Activated CD4-positive, alpha-beta T cell treated with anti-CD3 and anti-CD28 coated beads, Interleukin-2, amount 10 ng/mL, durations not matched to agents 24 days and 14 days (primary cell): ENCODE measurements at regions of chr1 and their contacts with region 1.

Region 1: GRCh38 chr1:112619520-112620376 is at the start of gene CAPZA1:
- DNase-seq: peak; percentile 97
- H3K4me3 Mint-ChIP-seq: peak within 1 kb of the TSS; percentile 99
- H3K27ac Mint-ChIP-seq: peak within 1 kb of the TSS; percentile 100
- H3K4me1 Mint-ChIP-seq: peaks cover 38% of the 10 kb centered on the region
- H3K27me3 Mint-ChIP-seq: no peaks in the 10 kb centered on the region
- total RNA-seq, gene CAPZA1: 241 and 250 TPM in 2 replicates

Region 2: DNA sequence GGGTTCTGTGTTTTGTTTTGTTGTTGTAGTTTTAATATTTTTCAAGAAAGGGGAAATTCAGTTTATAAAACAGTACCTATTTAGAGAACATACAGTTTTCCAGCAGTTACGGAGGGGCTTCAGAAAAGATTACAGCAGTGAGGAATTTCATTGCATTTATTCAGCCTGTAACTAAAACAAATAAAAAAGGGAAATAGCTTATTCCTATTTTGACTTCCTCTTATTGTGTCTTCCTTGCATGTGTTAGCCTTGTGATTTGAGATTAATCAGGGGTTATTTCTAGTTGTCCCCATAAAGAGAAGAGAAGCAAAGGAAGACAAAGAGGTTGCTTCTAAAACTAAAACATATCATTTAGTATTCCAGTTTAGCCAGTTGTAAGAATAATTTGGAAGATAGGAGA is 188.7 kb before region 1 on chr1:
- intact Hi-C with region 1: no loop called
- DNase-seq: no peak
- H3K4me3 Mint-ChIP-seq: no peak overlapping the region
- H3K27ac Mint-ChIP-seq: no peak overlapping the region
- H3K4me1 Mint-ChIP-seq: no peaks in the 10 kb centered on the region
- H3K27me3 Mint-ChIP-seq: peaks cover 12% of the 10 kb centered on the region

Region 3: GRCh38 chr1:112466078-112466660 is 153.6 kb before region 1 on chr1:
- intact Hi-C with region 1: loop called (anchors 2 kb)
- DNase-seq: peak; percentile 96
- H3K4me3 Mint-ChIP-seq: peak overlapping the region; percentile 85
- H3K27ac Mint-ChIP-seq: peak overlapping the region; percentile 68
- H3K4me1 Mint-ChIP-seq: peaks cover 16% of the 10 kb centered on the region
- H3K27me3 Mint-ChIP-seq: peaks cover 30% of the 10 kb centered on the region

Region 4: GRCh38 chr1:112515311-112516009 is 104.3 kb before region 1 on chr1:
- intact Hi-C with region 1: no loop called
- DNase-seq: no peak
- H3K4me3 Mint-ChIP-seq: no peak overlapping the region
- H3K27ac Mint-ChIP-seq: no peak overlapping the region
- H3K4me1 Mint-ChIP-seq: peaks cover 3% of the 10 kb centered on the region
- H3K27me3 Mint-ChIP-seq: peaks cover 16% of the 10 kb centered on the region

Region 5: GRCh38 chr1:112706908-112707663 is 87.3 kb after region 1 on chr1 and contains the start of gene RHOC:
- intact Hi-C with region 1: loop called (anchors 1 kb)
- DNase-seq: peak; percentile 91
- H3K4me3 Mint-ChIP-seq: peak within 1 kb of the TSS; percentile 87
- H3K27ac Mint-ChIP-seq: peak within 1 kb of the TSS; percentile 94
- H3K4me1 Mint-ChIP-seq: peaks cover 56% of the 10 kb centered on the region
- H3K27me3 Mint-ChIP-seq: peaks cover 21% of the 10 kb centered on the region
- total RNA-seq, gene RHOC: 48.5 and 53.4 TPM in 2 replicates

Region 6: GRCh38 chr1:112904071-112904830 is 284.5 kb after region 1 on chr1:
- intact Hi-C with region 1: loop called (anchors 5 kb)
- DNase-seq: peak; percentile 80
- H3K4me3 Mint-ChIP-seq: no peak overlapping the region
- H3K27ac Mint-ChIP-seq: peak overlapping the region; percentile 45
- H3K4me1 Mint-ChIP-seq: peaks cover 28% of the 10 kb centered on the region
- H3K27me3 Mint-ChIP-seq: no peaks in the 10 kb centered on the region

Region 7: DNA sequence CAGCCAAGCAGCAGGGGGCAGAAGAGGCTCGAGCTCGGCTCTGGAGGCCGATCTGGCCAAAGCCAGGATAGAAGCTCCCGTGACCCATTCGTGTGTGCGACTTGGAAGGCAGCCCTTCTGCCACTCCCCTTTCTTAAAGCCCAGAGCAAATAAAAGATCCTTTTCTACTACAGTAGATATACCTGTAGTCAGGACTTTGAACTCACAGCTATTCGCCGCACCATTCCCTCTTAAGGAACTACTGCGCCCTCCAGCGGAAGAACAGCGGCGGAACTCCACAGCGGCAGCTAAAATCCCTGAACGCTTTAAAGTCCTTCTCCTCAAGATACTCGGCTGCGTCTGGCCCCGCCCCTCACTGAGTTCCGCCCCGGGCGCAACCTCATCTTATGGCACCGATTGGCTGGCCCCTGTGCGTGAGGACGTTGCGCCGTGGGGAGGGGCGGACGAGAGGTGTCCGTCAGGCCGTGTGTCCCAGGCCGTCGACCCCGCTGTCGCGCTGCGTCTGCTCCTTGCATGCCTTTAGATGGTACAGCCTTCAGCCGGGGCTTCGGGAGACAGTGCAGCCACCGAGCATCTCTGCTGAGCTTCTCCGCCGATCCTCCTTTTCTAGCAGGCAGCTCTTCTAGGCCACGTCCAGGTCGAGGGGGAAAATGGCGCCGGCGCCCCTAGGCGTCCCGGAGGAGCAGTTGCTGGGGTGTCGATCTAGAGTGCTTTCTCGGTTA is 453.2 kb after region 1 on chr1 and contains the start of gene LRIG2:
- intact Hi-C with region 1: loop called (anchors 2 kb)
- DNase-seq: peak; percentile 99
- H3K4me3 Mint-ChIP-seq: peak within 1 kb of the TSS; percentile 100
- H3K27ac Mint-ChIP-seq: peak within 1 kb of the TSS; percentile 93
- H3K4me1 Mint-ChIP-seq: peaks cover 20% of the 10 kb centered on the region
- H3K27me3 Mint-ChIP-seq: no peaks in the 10 kb centered on the region
- total RNA-seq, gene LRIG2: 11.8 and 12.7 TPM in 2 replicates

Region 8: DNA sequence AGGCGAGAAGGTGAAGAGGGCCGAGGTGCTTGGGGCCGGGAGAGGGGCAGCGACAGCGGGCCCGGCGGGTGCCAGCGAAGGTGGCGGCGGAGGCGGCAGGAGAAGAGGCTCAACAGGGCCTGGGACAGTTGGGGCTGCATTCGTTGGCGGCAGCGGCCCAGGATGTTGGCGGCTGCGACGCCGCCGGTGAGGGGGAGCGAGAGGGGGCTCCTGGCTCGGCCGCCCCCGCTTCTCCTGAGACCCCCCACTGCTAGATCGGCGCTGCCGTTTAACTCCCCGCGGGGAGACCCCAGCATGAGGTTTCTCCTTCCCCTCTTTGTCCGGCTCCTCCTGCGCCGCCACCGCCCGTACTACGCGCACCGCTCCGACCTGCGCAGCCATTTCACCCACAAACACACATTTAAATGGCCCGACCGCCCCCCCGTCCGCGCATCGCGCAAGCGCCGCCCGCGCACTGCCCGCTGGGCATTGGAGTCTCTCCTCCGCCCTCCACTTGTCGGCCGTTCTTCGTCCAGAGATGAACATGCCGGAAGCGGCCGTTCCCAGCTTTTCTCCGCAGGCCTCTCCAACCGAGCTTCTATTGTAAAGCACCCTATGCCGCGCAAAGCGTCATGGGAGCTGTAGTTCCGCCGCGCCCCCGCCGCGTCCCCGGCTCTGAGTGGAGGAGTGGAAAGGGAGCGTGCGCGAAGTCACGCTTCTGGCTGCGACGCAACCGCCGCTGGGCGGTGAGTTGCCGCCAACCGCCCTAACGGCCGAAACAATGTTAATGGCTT is 1192.3 kb after region 1 on chr1 and contains the start of gene RSBN1:
- intact Hi-C with region 1: loop called (anchors 5 kb)
- DNase-seq: peak; percentile 100
- H3K4me3 Mint-ChIP-seq: peak within 1 kb of the TSS; percentile 96
- H3K27ac Mint-ChIP-seq: peak within 1 kb of the TSS; percentile 96
- H3K4me1 Mint-ChIP-seq: peaks cover 21% of the 10 kb centered on the region
- H3K27me3 Mint-ChIP-seq: no peaks in the 10 kb centered on the region
- total RNA-seq, gene RSBN1: 20.9 and 21.5 TPM in 2 replicates